ENCODE measurements at regions of chr17 and their contacts with region 1.

Region 1: DNA sequence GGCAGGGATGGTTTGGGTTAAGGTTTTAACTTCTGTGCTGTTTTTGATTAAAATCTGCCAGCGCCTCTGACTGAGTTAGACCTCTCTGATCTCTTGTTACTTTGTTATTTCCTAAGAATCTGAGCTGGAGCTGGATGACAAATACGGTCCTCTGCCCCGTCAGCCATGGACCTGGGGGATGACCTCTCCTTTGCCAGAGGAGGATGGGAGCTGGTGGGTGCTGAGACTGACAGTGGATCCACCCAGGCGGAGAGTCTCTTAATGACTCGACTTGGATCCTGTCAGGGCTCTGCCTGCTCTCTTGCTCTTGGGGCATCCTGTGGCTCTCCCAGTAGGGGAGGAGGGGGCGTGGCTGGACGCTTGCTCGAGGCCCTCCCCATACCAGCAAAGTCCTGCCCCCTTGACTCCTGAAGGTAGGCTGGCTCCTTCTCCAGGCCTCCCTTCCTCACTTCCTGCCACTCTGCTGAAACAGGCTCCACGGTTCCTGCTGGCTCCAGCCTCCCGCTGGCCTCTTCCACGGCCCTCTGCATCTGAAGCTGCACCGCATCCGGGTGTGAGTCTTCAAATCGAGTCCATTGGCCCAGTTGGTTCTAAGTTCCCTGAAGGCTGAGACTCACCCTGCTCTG is 24.8 kb upstream of the MAP3K14 start:
- DNase-seq: peak; percentile 82
- H3K4me3 ChIP-seq: no peak overlapping the region
- H3K27ac ChIP-seq: peak overlapping the region; percentile 58
- H3K4me1 ChIP-seq: peaks cover 32% of the 10 kb centered on the region
- H3K27me3 ChIP-seq: no peaks in the 10 kb centered on the region
- CTCF ChIP-seq: no peak
- POLR2A ChIP-seq: peak; percentile 86

Region 2: DNA sequence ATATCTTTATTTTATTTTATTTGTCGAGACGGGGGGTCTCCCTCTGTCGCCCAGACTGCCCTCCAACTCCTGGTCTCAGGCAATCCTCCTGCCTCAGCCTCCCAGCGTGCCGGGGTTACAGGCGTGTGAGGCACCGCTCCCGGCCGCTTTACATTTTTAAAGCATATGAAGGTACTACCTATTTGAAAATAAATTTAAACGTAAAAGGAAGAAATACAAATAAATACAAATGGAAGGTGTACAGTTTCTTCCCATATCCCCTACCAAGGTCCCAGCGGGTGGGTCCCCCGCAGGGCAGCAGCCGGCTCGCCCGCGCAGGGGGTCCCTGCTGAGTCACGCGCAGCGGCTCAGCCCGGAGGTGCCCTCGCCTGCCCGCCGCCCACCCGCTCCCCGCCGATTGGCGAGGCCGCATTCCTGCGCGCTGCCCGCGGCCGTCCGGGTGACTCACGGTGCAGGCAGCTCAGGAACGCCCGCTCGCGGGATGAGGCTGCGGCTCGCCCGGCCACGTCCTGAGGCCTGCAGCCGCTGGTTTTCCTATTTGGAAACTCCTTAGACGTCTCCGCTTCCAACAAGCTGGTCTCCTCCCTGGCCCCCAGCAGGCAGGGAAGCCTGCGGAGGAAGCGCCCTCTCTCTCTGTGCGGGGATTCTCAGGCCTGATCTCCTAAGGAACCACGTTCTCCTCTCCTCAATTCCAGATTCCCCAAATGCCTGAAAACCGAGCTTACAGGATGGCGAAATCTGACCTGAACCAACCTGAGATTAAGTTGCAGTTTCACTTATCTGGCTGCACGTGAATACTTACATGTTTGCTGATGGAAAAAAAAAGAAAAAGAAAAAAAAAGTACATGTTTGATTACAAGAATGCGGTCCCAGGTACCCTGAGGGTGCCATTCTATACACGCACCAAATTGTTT is 30.0 kb after region 1 on chr17:
- CTCF ChIA-PET with region 1: interaction called, 5 read pairs
- POLR2A ChIA-PET with region 1: interaction called, 4 read pairs
- dilution Hi-C with region 1: no loop called
- intact Hi-C with region 1: loop called (anchors 2 kb)
- DNase-seq: peak; percentile 93
- H3K4me3 ChIP-seq: peak overlapping the region in 2 of 3 experiments; percentile 12 to 18
- H3K27ac ChIP-seq: peak overlapping the region; percentile 97
- H3K4me1 ChIP-seq: peaks cover 20% of the 10 kb centered on the region
- H3K27me3 ChIP-seq: no peaks in the 10 kb centered on the region
- CTCF ChIP-seq: peak in 1 of 2 donors; percentile 3
- POLR2A ChIP-seq: peak; percentile 76

Measured in endothelial cell of umbilical vein (primary cell).